ENCODE measurements at regions of chr1 and their contacts with region 1.

Region 1: GRCh38 chr1:89843281-89844121 is 22.7 kb downstream of the LRRC8D start:
- DNase-seq: peak; percentile 66 to 87 (median 76)
- ATAC-seq: peak; percentile 82 to 84
- H3K4me3 Mint-ChIP-seq: peak overlapping the region; percentile 93 to 97 (median 95)
- H3K27ac Mint-ChIP-seq: peak overlapping the region; percentile 91 to 97 (median 94)
- H3K4me1 Mint-ChIP-seq: peaks cover 7 to 58% (median 52%) of the 10 kb centered on the region in 4 donors
- H3K27me3 Mint-ChIP-seq: no peaks in the 10 kb centered on the region

Region 2: DNA sequence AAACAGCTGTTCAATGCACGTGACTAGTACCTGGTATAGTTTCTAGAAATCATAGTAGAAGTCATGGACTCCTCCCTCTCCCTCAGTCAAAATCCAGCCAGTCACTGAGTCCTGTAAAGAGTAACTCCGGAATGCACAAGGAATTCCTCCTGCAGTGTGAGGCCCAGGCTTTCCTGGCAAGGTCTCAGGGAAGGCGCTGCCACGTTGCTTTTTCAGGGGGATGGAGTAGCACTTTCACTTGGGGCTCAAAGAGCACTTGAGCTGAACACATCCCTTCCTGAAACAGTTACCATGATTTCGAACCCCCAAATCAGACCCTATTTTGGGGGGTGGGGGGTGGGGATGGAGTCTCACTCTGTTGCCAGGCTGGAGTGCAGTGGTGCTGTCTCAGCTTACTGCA is 49.1 kb before region 1 on chr1:
- POLR2A ChIA-PET with region 1: no interaction called
- DNase-seq: no peak
- ATAC-seq: no peak
- H3K4me3 Mint-ChIP-seq: no peak overlapping the region
- H3K27ac Mint-ChIP-seq: no peak overlapping the region
- H3K4me1 Mint-ChIP-seq: peaks cover 0 to under 1% (median 0%) of the 10 kb centered on the region in 4 donors
- H3K27me3 Mint-ChIP-seq: peaks cover 0 to 4% (median 0%) of the 10 kb centered on the region in 5 donors

Region 3: GRCh38 chr1:89820422-89821321 is 22.8 kb before region 1 on chr1 and contains the start of gene LRRC8D:
- POLR2A ChIA-PET with region 1: interaction called, 47 read pairs
- DNase-seq: peak; percentile 46 to 80 (median 58)
- ATAC-seq: peak; percentile 64 to 71
- H3K4me3 Mint-ChIP-seq: peak within 1 kb of the TSS; percentile 85 to 96 (median 92)
- H3K27ac Mint-ChIP-seq: peak within 1 kb of the TSS; percentile 82 to 97 (median 92)
- H3K4me1 Mint-ChIP-seq: peaks cover 29 to 62% (median 52%) of the 10 kb centered on the region in 4 donors
- H3K27me3 Mint-ChIP-seq: no peaks in the 10 kb centered on the region
- polyA plus RNA-seq, gene LRRC8D: 42.3 to 60.0 (median 46.0) TPM

Region 4: GRCh38 chr1:89855413-89856123 is 12.1 kb after region 1 on chr1:
- POLR2A ChIA-PET with region 1: interaction called, 13 read pairs
- DNase-seq: peak in 4 of 10 donors; percentile 14 to 76 (median 54)
- ATAC-seq: peak; percentile 83 to 89
- H3K4me3 Mint-ChIP-seq: peak overlapping the region in 5 of 10 donors; percentile 34 to 81 (median 54)
- H3K27ac Mint-ChIP-seq: no peak overlapping the region
- H3K4me1 Mint-ChIP-seq: peaks cover 11 to 24% (median 15%) of the 10 kb centered on the region in 4 donors
- H3K27me3 Mint-ChIP-seq: no peaks in the 10 kb centered on the region

Region 5: DNA sequence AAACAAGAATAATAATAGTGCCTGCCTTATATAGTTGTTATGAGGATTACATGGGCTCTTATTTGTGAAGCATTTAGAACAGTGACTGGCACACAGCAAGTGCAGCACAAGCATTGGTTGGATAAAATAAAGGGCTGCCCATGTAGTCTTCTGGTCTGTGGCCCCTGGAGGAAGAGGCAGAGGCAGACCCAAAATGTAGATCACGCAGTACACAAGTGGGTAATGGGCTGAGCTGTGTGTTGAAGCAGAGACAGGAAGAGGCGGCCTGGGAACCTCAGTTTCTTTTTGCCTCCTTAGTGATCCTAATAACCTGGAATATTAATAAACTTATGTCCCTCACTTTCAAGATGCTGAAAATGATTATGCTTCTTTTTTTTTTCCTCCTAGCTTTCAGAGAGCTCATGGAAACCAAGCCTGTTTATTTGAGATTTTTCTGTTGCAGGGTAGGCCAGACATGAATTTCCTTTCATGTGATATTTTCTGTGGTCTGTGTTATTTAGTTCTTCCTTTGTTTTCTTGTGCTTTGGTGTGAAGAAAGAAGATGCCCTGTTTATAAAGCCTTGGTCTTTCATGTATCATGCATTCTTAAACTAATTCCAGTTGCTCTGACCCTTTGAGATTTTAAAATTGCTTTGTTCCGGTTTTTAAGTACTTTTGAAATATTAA is 19.8 kb after region 1 on chr1:
- POLR2A ChIA-PET with region 1: interaction called, 10 read pairs
- DNase-seq: peak in 1 of 10 donors; percentile 30
- ATAC-seq: peak; percentile 64 to 84
- H3K4me3 Mint-ChIP-seq: peak overlapping the region; percentile 16 to 75 (median 64)
- H3K27ac Mint-ChIP-seq: peak overlapping the region; percentile 81 to 95 (median 90)
- H3K4me1 Mint-ChIP-seq: peaks cover 29 to 76% (median 57%) of the 10 kb centered on the region in 4 donors
- H3K27me3 Mint-ChIP-seq: no peaks in the 10 kb centered on the region

Region 6: GRCh38 chr1:89870998-89871397 is 27.5 kb after region 1 on chr1:
- POLR2A ChIA-PET with region 1: interaction called, 10 read pairs
- DNase-seq: peak in 4 of 10 donors; percentile 27 to 72 (median 50)
- ATAC-seq: peak; percentile 84 to 98
- H3K4me3 Mint-ChIP-seq: peak overlapping the region in 9 of 10 donors; percentile 20 to 76 (median 56)
- H3K27ac Mint-ChIP-seq: peak overlapping the region; percentile 23 to 96 (median 91)
- H3K4me1 Mint-ChIP-seq: peaks cover 20 to 85% (median 62%) of the 10 kb centered on the region in 4 donors
- H3K27me3 Mint-ChIP-seq: no peaks in the 10 kb centered on the region

Measured in naive thymus-derived CD8-positive, alpha-beta T cell (primary cell).